Activated CD4-positive, alpha-beta T cell treated with anti-CD3 and anti-CD28 coated beads, Interleukin-2, amount 10 ng/mL, durations not matched to agents 24 days and 14 days (primary cell): ENCODE measurements at regions of chr12 and their contacts with region 1.

Region 1: DNA sequence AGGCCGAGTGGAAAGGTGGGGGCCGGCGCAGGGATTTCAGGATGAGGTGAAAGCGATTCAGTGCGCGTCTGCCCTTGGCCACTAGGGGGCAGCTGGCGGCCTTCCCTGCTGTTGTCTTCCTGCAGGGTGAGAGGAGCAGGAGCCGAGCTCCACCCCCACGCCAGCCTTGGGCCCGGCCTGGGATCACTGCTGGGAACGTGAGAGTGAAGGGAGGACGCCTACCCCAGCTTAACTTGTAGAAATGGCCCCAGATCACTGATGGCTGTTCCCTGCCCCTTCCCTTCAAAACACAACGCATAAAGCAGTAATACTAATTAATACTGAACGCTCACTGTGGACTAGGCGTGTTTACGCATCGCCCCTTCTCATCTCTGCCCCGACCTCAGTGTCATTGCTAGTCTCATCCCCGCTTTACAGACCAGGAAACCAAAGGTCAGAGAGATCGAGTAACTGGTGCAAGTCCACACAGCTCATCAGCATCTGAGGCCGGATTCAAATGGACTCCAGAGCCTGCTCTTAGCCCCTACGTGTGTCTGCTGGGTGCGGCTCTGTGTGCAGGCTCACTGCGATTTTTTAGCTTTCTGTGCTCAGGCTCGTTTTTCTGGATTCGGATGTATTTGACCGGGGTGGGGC is 24.3 kb downstream of the MVK start:
- DNase-seq: peak; percentile 88
- H3K4me3 Mint-ChIP-seq: no peak overlapping the region
- H3K27ac Mint-ChIP-seq: no peak overlapping the region
- H3K4me1 Mint-ChIP-seq: peaks cover 21% of the 10 kb centered on the region
- H3K27me3 Mint-ChIP-seq: peaks cover 2% of the 10 kb centered on the region

Region 2: GRCh38 chr12:109497675-109498074 is 100.2 kb before region 1 on chr12:
- intact Hi-C with region 1: no loop called
- DNase-seq: no peak
- H3K4me3 Mint-ChIP-seq: no peak overlapping the region
- H3K27ac Mint-ChIP-seq: no peak overlapping the region
- H3K4me1 Mint-ChIP-seq: peaks cover 4% of the 10 kb centered on the region
- H3K27me3 Mint-ChIP-seq: no peaks in the 10 kb centered on the region

Region 3: DNA sequence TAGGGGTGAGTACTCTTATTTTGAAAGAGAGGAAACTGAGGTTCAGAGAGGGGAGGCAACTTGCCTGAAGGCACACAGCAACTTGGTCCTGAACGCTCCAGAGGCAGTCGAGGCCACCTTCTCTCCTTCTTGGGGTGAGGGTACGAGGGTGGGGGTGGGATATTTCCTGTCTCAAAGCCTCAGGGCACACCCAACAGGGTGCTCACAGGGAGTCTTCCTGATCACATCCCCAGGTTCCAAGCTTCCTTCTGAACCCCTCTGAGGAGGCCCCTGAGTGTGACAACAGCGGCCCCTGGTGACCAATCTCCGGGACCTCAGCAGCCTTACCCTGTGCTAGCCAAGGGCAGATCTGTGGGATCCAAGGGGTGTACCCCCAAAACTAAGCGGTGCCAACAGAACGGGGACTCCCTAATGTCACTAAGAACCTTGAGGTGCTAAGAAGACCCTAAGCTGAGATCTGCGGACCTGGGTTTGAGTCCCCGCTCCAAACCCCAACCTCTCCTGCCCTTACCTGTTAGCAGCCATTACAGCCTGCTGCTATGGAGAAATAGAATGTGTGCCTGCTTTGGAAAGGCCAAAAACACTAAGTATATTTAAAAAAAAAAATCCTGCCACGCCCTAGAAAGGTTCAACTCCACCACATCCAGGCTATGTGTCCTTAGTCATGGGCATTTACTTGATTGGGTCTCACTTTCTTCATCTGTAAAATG is 177.4 kb after region 1 on chr12:
- intact Hi-C with region 1: loop called (anchors 1 kb)
- DNase-seq: peak; percentile 91
- H3K4me3 Mint-ChIP-seq: no peak overlapping the region
- H3K27ac Mint-ChIP-seq: no peak overlapping the region
- H3K4me1 Mint-ChIP-seq: peaks cover 4% of the 10 kb centered on the region
- H3K27me3 Mint-ChIP-seq: no peaks in the 10 kb centered on the region

Region 4: DNA sequence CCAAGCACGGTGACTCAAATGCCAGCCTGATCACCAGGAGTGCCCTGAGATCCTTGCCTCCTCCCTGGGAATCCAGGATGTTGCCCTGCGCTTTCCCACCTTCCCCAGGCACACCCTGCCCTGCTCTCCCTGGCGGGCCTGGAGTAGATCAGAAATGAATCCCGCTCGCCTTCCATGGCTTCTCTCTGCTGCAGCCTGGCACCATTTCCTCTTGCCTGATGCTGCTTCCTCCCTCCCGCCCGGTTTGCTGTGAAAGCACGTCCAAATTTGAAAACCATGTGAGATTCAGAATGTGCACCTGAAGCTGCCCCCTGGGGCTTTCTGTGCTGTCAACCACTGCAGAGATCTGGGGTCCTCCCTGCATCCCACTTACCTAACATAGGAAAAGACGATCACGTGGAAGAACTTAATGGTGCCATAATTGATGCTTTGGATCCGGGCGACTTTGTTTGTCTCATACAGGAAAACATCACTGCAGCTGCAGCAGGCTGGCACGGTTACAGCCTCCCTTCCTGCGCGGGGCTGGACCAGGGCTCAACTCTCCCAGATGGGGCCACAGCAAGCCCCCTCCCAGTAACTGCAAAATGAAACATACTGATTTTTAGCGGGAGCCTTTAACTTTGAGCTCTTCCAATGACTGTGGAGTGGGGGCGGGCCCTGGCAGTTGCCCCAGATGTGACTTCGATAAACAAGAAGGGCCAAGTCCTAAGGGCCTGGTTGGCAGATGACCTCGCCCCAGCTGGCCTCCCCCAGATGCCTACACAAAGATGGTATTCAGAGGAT is 475.3 kb after region 1 on chr12:
- intact Hi-C with region 1: no loop called
- DNase-seq: peak; percentile 81
- H3K4me3 Mint-ChIP-seq: peak overlapping the region; percentile 96
- H3K27ac Mint-ChIP-seq: peak overlapping the region; percentile 96
- H3K4me1 Mint-ChIP-seq: peaks cover 43% of the 10 kb centered on the region
- H3K27me3 Mint-ChIP-seq: no peaks in the 10 kb centered on the region